ENCODE measurements at regions of chr1 and their contacts with region 1.

Region 1: DNA sequence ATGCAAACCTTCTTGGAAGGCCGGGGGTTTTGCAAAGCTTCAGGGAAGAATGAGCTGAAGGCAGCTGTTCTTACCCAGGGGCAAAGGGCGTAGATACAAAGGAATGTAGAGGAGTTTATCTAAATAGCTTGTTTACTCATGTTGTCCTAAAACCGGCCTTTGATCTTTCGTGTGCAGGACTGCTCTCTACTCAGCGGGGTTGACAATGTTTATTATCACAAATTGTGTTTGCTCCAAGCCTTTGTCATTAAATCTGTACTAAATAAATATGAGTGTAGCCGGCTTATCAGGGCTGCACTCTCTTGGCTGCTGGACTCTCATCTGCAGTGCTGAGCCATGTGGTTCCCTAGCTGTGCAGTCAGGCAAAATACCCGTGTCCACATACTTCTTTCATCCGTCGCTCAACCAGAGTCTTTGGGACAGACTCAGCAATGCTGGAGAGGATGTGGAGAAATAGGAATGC is 199.0 kb downstream of the LBR start:
- DNase-seq: peak; percentile 90
- ATAC-seq: peak; percentile 99
- H3K4me3 ChIP-seq: no peak overlapping the region
- H3K27ac ChIP-seq: peak overlapping the region; percentile 22
- H3K4me1 ChIP-seq: peaks cover 30% of the 10 kb centered on the region
- H3K27me3 ChIP-seq: no peaks in the 10 kb centered on the region
- CTCF ChIP-seq: no peak
- EP300 ChIP-seq: peak; percentile 14 to 81; a peak in 2 of 4 replicates
- POLR2A ChIP-seq: no peak
- RAD21 ChIP-seq: no peak

Region 2: GRCh38 chr1:225209153-225209552 is 19.7 kb before region 1 on chr1:
- CTCF ChIA-PET with region 1: no interaction called
- POLR2A ChIA-PET with region 1: no interaction called
- in situ Hi-C with region 1: no loop called
- intact Hi-C with region 1: loop called (anchors 2 kb)
- DNase-seq: peak; percentile 77
- ATAC-seq: peak; percentile 96
- H3K4me3 ChIP-seq: no peak overlapping the region
- H3K27ac ChIP-seq: peak overlapping the region; percentile 63
- H3K4me1 ChIP-seq: peaks cover 42% of the 10 kb centered on the region
- H3K27me3 ChIP-seq: no peaks in the 10 kb centered on the region
- CTCF ChIP-seq: no peak
- EP300 ChIP-seq: peak in 1 of 2 experiments; percentile 85; a peak in 3 of 4 replicates
- POLR2A ChIP-seq: no peak
- RAD21 ChIP-seq: no peak

Region 3: DNA sequence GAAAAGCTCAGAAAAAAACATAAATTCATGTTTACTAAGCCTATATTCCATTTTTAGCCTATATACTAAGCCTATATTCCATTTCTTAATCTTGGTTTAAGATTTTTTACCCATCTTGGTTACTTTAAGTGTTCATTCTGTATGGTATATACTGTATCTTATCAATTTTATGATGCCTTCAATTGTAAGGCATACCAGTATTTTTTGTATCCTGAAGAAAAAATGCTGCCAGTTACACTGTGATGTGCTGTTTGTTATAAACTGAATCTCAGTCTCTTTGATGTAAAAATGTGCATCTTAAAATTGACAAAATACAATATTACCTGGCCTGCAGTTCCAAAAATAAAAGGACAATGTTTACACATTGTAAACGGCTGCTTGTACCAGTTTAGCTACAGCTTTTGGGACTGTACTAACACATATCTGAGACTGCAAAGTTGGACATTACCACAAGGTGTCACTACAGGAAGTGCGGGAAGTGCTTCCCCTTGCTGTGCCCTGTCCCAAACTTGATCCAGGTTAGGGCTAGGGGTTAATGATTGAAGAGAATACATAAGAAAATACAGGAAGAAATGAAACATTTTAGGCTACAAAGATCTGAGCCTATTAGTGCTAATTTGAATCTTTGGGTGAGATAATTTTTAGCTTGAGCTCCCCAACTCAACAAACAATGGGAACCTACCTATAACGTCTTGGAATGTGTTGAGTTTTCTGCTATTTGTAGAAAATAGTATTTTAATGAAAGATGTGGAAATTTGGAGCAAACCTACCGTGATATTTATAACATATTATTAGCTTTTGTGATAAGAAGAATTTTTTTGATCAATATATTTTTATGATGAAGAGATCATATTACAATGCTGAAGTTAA is 90.1 kb after region 1 on chr1:
- CTCF ChIA-PET with region 1: no interaction called
- POLR2A ChIA-PET with region 1: no interaction called
- in situ Hi-C with region 1: no loop called
- intact Hi-C with region 1: no loop called
- DNase-seq: peak; percentile 54
- ATAC-seq: peak; percentile 96
- H3K4me3 ChIP-seq: no peak overlapping the region
- H3K27ac ChIP-seq: no peak overlapping the region
- H3K4me1 ChIP-seq: no peaks in the 10 kb centered on the region
- H3K27me3 ChIP-seq: no peaks in the 10 kb centered on the region
- CTCF ChIP-seq: peak; percentile 82
- EP300 ChIP-seq: no peak
- POLR2A ChIP-seq: no peak
- RAD21 ChIP-seq: peak; percentile 37